Colonic mucosa (tissue), 4 donors: ENCODE measurements at regions of chr22 and their contacts with region 1.

Region 1: GRCh38 chr22:32796865-32797573 is 4.5 kb upstream of the TIMP3 start:
- DNase-seq: peak; percentile 69
- H3K4me3 ChIP-seq: no peak overlapping the region
- H3K27ac ChIP-seq: no peak overlapping the region
- H3K4me1 ChIP-seq: no peaks in the 10 kb centered on the region
- H3K27me3 ChIP-seq: peaks cover 12% of the 10 kb centered on the region
- CTCF ChIP-seq: peak; percentile 90

Region 2: DNA sequence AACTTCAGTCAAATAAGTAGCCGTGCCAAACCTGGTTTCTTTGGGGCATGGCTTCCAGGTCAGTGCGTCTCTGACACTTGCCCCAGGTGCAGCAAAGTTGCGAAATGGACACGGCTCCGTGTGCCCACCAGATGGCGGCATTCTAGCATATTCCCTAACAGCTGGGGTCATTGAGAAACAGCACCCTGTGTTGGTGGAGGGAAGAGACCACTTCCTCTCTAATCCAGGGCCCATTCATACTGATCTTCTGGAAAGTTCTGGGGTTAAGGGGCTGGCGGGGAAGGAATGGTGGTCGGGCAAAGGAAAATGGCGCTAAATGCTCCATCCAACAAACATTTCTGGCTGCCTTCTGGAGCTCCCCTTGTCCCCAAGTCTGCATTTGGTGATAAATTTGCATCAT is 136.7 kb before region 1 on chr22:
- intact Hi-C with region 1: loop called (anchors 2 kb)
- DNase-seq: peak; percentile 74
- H3K4me3 ChIP-seq: no peak overlapping the region
- H3K27ac ChIP-seq: no peak overlapping the region
- H3K4me1 ChIP-seq: no peaks in the 10 kb centered on the region
- H3K27me3 ChIP-seq: no peaks in the 10 kb centered on the region
- CTCF ChIP-seq: peak; percentile 61

Region 3: DNA sequence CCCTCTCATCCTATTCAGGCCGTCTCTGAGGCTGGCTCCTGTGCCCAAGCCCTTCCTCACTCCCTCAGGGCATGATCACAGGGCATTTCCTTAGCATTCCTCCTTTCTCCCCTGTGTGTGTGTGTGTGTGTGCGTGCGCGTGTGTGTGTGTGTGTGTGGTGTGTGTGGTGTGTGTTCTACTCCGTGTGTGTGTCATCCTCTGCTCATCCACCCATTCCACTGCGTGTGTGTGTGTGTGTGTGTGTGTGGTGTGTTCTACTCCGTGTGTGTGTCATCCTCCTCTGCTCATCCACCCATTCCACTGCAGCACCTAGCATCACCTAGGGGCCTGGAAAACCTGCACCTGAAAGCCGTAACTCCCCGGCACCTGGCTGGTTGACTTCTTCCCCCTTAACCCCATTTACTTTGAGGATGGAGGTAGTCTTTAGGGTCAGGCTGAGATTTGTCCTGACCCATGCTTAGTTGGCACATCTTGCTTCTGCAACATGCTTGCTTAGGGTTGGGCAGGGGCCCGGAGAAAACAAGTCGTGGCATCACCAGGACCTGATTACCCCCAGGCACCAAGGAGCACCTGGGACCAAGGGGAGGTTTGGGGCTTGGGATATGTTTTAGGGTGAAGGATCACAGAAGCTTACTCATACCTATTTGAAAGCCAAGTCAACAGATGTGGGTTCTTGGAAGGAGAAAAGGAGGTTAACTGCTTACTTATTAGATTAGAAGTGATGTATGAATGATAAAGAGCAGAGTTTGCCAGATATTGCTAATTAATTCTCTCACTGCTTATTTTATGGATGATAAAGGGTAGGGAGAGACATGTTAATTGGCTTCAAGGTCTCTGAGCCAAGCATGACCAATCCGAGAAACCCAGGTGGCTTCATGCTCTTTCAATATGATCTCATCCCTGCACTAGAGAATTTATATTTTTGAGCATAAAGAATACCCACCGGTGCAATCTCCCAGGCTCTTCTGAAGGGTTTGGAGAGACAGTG is 23.4 kb after region 1 on chr22:
- intact Hi-C with region 1: no loop called
- DNase-seq: no peak
- H3K4me3 ChIP-seq: no peak overlapping the region
- H3K27ac ChIP-seq: no peak overlapping the region
- H3K4me1 ChIP-seq: no peaks in the 10 kb centered on the region
- H3K27me3 ChIP-seq: no peaks in the 10 kb centered on the region
- CTCF ChIP-seq: no peak

Region 4: GRCh38 chr22:32920032-32920628 is 123.1 kb after region 1 on chr22:
- intact Hi-C with region 1: no loop called
- DNase-seq: peak; percentile 51
- H3K4me3 ChIP-seq: no peak overlapping the region
- H3K27ac ChIP-seq: no peak overlapping the region
- H3K4me1 ChIP-seq: no peaks in the 10 kb centered on the region
- H3K27me3 ChIP-seq: no peaks in the 10 kb centered on the region
- CTCF ChIP-seq: no peak